ENCODE measurements at regions of chr6 and their contacts with region 1.

Region 1: GRCh38 chr6:52399511-52400312 is 20.4 kb upstream of the EFHC1 start:
- DNase-seq: no peak
- ATAC-seq: peak; percentile 50
- H3K4me3 ChIP-seq: no peak overlapping the region
- H3K27ac ChIP-seq: no peak overlapping the region
- H3K4me1 ChIP-seq: peaks cover 37% of the 10 kb centered on the region
- H3K27me3 ChIP-seq: no peaks in the 10 kb centered on the region
- CTCF ChIP-seq: peak; percentile 84 to 93 (median 90); a peak in 5 of 6 replicates
- EP300 ChIP-seq: no peak
- POLR2A ChIP-seq: no peak
- RAD21 ChIP-seq: peak; percentile 98

Region 2: DNA sequence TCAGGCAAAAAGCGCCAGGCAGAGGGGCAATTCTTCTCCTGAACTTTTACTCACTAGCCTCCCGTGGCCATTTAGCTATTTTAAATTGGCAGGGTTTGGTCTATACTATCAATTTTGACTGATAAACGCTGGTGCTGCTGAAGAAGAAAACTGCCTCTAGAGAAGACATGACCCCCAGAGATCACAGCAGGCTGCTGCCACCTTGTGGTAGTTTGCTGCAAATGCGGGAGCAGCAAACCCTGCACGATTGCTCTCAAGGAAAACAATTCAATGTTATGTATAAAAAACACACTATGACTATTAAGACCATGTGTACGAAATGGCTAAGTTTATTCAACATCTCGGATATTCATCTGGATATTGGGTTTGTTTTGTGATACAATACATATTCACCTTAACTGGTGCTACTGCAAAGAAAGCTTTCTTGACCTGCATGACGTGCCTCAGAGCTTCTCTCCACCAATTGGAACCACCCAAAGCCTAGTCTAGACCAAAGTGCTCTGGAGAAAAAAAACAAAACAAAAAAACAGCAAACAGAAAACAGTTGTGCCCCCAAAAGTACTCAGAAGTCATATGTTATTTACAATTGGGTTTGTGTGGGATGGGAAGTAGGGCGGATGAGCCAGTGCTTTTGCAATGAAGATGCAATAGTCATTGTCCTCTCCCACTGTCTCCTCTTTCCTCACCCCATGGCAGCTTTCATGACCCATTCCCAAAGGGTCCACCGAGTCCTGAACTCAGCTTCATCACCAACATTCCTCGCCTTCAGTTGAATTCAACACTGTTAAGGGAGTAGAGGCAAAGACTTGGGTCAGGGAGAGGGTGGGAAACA is 135.8 kb before region 1 on chr6:
- CTCF ChIA-PET with region 1: interaction called, 59 read pairs
- POLR2A ChIA-PET with region 1: no interaction called
- RAD21 ChIA-PET with region 1: interaction called, 10 read pairs
- SMC1A ChIA-PET with region 1: interaction called, 22 read pairs
- in situ Hi-C with region 1: no loop called
- intact Hi-C with region 1: no loop called
- DNase-seq: no peak
- ATAC-seq: peak; percentile 92
- H3K4me3 ChIP-seq: no peak overlapping the region
- H3K27ac ChIP-seq: no peak overlapping the region
- H3K4me1 ChIP-seq: no peaks in the 10 kb centered on the region
- H3K27me3 ChIP-seq: no peaks in the 10 kb centered on the region
- CTCF ChIP-seq: peak; percentile 91 to 97 (median 96); a peak in 5 of 6 replicates
- EP300 ChIP-seq: no peak
- POLR2A ChIP-seq: 0 out of 2 replicates have a peak, but pooled peaks have one; percentile 23
- RAD21 ChIP-seq: peak; percentile 94

Region 3: DNA sequence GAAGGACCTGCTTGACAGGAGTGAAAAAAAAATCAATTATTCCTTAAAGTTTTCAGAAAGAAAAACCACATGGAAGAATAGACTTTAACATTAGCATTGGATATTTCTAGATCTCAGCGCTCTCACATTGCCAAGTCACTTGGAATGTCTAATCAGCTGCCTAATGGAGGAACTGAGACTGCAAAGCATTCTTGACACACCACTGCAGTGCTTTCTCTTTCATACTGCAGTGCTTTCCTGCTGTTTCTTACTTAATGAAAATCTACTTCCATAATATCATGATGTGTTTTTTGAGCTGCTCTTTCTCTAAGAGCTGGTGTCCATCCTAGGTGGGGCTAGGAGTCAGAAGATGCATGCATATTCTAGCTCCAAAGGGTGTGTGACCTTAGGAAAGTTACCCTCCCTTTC is 94.7 kb before region 1 on chr6:
- CTCF ChIA-PET with region 1: interaction called, 6 read pairs
- POLR2A ChIA-PET with region 1: interaction called, 7 read pairs
- RAD21 ChIA-PET with region 1: interaction called, 9 read pairs
- SMC1A ChIA-PET with region 1: interaction called, 16 read pairs
- in situ Hi-C with region 1: loop called (anchors 5 kb)
- intact Hi-C with region 1: no loop called
- DNase-seq: no peak
- ATAC-seq: peak; percentile 74
- H3K4me3 ChIP-seq: peak overlapping the region; percentile 25; the same call in 1 of the 2 replicates
- H3K27ac ChIP-seq: peak overlapping the region; percentile 89
- H3K4me1 ChIP-seq: peaks cover 49% of the 10 kb centered on the region
- H3K27me3 ChIP-seq: no peaks in the 10 kb centered on the region
- CTCF ChIP-seq: no peak
- EP300 ChIP-seq: peak in 1 of 2 experiments; percentile 46; a peak in 2 of 4 replicates
- POLR2A ChIP-seq: no peak
- RAD21 ChIP-seq: 0 out of 2 replicates have a peak, but pooled peaks have one; percentile 1

Region 4: DNA sequence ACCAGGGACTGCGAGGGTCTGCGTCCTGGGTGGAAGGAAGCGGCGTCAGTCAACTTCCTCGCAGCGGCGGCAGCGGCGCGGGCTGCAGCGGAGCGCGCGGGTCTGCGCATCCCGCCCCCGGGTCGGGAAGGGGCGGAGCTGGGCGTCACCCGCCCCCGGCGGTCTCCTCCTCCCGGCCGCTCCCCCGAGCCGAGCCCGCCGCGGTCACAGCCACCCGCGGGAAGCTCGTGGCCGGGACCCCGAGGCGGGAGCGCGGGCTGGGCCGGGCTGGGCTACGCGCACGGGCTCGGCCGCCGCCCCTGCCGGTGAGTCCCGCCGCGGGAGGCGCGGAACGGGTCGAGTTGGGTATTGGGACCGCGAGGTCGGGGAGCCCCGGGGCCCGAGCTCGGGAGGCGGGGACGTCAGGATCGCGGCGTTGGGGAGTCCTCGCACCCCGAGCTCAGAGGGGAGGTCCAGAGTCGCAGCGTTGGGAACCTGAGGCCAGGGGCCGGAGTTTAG is 37.7 kb before region 1 on chr6 and contains the start of gene PAQR8:
- CTCF ChIA-PET with region 1: interaction called, 75 read pairs
- POLR2A ChIA-PET with region 1: interaction called, 6 read pairs
- RAD21 ChIA-PET with region 1: interaction called, 15 read pairs
- SMC1A ChIA-PET with region 1: interaction called, 33 read pairs
- in situ Hi-C with region 1: no loop called
- intact Hi-C with region 1: loop called (anchors 2 kb)
- DNase-seq: no peak
- ATAC-seq: peak; percentile 90
- H3K4me3 ChIP-seq: peak within 1 kb of the TSS; percentile 94
- H3K27ac ChIP-seq: peak within 1 kb of the TSS; percentile 80
- H3K4me1 ChIP-seq: peaks cover 20% of the 10 kb centered on the region
- H3K27me3 ChIP-seq: no peaks in the 10 kb centered on the region
- CTCF ChIP-seq: no peak
- EP300 ChIP-seq: no peak
- POLR2A ChIP-seq: peak; percentile 78
- RAD21 ChIP-seq: no peak
- polyA plus RNA-seq, gene PAQR8: 3.9 to 4.7 TPM

Measured in GM12878 (cell line).